ENCODE measurements at regions of chr12 and their contacts with region 1.

Region 1: DNA sequence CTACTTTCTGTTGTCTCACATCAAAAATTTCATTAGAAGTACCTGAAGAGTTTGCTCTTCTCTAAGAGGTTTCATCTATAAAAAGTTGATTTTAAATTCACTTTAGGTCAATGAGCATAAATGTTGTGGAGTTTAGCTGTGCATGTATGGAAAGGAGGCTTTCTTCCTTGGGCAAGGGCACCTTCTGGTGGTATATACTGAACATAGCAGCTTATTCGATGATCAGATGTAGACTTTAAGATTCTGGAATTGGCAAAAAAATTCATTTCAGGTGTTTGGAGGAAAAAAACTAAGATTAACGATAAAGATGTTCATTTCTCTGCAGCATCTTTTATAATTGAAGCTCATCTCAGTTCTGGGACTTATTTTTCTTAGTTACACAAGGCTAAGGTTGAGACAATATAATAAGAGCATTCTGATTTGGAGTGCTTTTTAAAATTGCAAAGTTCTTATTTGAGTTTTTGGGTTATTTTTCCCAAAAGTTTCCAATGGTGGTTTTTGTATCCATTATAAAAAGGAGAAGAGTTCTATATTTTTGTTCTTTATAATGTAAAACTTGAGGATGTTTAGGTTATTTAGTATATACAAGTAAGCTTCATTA is 46.8 kb downstream of the TMEM117 start:
- DNase-seq: peak; percentile 54
- H3K4me3 ChIP-seq: no peak overlapping the region
- H3K27ac ChIP-seq: no peak overlapping the region
- H3K27me3 ChIP-seq: no peaks in the 10 kb centered on the region
- CTCF ChIP-seq: peak; percentile 97

Region 2: GRCh38 chr12:43444940-43445564 is 437.6 kb before region 1 on chr12:
- CTCF ChIA-PET with region 1: interaction called, 55 read pairs
- POLR2A ChIA-PET with region 1: no interaction called
- DNase-seq: peak; percentile 18
- H3K4me3 ChIP-seq: no peak overlapping the region
- H3K27ac ChIP-seq: no peak overlapping the region
- H3K27me3 ChIP-seq: no peaks in the 10 kb centered on the region
- CTCF ChIP-seq: peak; percentile 92

Region 3: GRCh38 chr12:43758728-43759563 is 123.7 kb before region 1 on chr12 and contains the starts of genes IRAK4 and PUS7L:
- CTCF ChIA-PET with region 1: interaction called, 16 read pairs
- POLR2A ChIA-PET with region 1: no interaction called
- DNase-seq: peak; percentile 89
- H3K4me3 ChIP-seq: peak within 1 kb of the TSS; percentile 88
- H3K27ac ChIP-seq: peak within 1 kb of the TSS; percentile 83
- H3K27me3 ChIP-seq: no peaks in the 10 kb centered on the region
- CTCF ChIP-seq: peak; percentile 56
- polyA plus RNA-seq, gene IRAK4: 20.6 and 29.4 TPM in 2 replicates
- polyA plus RNA-seq, gene PUS7L: 9.1 and 15.2 TPM in 2 replicates

Region 4: GRCh38 chr12:43795716-43796288 is 86.9 kb before region 1 on chr12:
- CTCF ChIA-PET with region 1: interaction called, 17 read pairs
- POLR2A ChIA-PET with region 1: no interaction called
- DNase-seq: no peak
- H3K4me3 ChIP-seq: no peak overlapping the region
- H3K27ac ChIP-seq: no peak overlapping the region
- H3K27me3 ChIP-seq: no peaks in the 10 kb centered on the region
- CTCF ChIP-seq: no peak

Region 5: DNA sequence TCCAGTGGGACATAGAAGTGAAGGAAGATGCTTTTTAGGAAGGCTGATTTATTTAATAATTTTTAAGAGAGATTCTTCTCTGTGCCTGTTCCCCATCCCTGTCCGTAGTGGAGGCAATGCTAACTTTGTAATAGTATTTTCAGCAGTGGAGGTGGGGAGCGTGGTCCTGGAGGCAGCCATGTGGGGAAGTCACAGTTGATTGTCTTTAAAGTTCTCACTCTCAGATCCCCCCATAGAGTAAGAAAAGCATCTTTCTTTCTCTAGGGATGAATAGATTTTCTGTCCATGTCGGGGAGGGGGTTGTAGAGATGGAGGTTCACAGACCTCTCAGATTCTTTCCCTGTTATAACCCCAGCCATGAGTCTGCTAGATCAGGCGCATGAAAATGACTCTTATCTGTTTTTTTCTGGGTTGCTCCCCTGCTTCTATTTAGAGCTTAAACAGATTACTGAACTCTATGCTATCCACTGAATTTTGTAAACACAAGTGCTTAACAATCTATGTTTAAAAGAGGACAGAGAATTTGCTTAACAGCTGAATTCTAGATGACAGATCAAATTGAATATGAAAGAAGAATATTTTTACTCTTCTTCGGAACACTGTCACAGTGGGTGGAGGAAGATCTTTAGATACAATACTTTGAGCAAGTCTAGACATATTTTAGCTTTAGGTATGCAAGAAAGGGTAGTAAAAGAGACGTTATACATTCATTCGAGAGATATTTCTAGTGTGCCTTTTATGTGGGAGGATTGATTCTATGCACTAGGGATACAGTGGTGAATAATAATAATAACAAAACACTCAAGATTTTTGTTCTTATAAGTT is 21.5 kb before region 1 on chr12:
- CTCF ChIA-PET with region 1: interaction called, 24 read pairs
- POLR2A ChIA-PET with region 1: no interaction called
- DNase-seq: no peak
- H3K4me3 ChIP-seq: no peak overlapping the region
- H3K27ac ChIP-seq: peak overlapping the region; percentile 42
- H3K27me3 ChIP-seq: no peaks in the 10 kb centered on the region
- CTCF ChIP-seq: no peak